ENCODE measurements at regions of chr10 and their contacts with region 1.

Region 1: GRCh38 chr10:82211346-82211745 is 336.4 kb downstream of the NRG3 start:
- DNase-seq: no peak
- ATAC-seq: no peak
- H3K4me3 Mint-ChIP-seq: no peak overlapping the region
- H3K27ac Mint-ChIP-seq: no peak overlapping the region
- H3K4me1 Mint-ChIP-seq: no peaks in the 10 kb centered on the region
- H3K27me3 Mint-ChIP-seq: no peaks in the 10 kb centered on the region
- CTCF ChIP-seq: no peak

Region 2: DNA sequence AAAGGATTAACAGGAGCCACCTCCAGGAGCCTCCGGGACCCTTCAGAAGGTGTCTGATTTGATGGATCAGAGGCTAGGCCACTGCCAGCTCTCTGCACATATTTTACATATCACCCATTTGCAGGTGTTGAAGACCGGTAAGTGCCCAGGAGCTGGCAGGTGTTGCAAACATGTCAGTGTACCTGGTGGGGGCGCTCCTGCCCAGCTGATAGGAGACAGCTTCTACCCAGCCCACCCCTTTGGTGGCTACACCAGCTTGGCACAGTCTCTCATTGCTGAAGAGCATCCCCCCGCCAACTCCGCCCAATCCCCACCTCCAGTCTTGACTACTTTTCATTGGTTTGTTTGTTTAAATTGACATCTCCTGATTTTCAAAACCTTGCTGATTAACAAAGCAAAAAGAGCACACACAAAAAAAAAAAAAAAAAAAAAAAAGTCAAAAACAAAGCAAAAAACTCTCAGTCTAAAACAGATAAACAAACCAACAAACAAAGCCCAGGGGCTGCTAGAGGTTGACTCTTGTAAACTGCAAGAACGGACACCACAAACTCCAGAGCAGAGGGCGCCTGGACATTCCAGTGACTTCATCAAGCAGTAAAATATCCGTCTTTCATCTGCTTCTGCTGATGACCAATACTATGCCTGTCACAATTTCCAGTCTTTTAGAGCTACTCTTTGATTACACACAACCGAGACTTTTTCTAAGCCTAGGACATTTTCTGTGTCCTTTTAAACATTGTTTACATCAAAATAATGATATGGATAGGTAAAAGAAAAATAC is 61.0 kb before region 1 on chr10:
- CTCF ChIA-PET with region 1: no interaction called
- POLR2A ChIA-PET with region 1: no interaction called
- intact Hi-C with region 1: loop called (anchors 10 kb)
- DNase-seq: no peak
- ATAC-seq: no peak
- H3K4me3 Mint-ChIP-seq: no peak overlapping the region
- H3K27ac Mint-ChIP-seq: no peak overlapping the region
- H3K4me1 Mint-ChIP-seq: no peaks in the 10 kb centered on the region
- H3K27me3 Mint-ChIP-seq: no peaks in the 10 kb centered on the region
- CTCF ChIP-seq: no peak

Region 3: DNA sequence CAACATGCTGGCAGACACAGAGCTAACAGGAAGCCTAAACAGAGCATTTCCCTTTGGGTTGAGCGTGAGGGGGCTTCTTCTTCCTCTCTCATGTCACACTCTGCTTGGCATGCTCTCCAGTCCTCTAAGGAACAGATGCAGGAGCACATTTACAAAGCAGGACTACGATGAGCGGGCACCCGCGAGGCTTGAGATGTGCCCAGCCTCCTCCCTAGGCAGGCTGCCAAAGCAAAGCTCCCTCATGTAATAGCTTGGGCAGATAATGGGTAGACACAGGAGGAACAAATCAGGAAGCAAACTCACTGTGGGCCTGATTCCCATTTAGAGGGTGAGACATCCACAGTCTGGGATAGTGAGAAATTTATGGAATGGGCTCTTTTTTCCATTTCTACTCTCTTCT is 182.8 kb after region 1 on chr10:
- CTCF ChIA-PET with region 1: no interaction called
- POLR2A ChIA-PET with region 1: no interaction called
- intact Hi-C with region 1: no loop called
- DNase-seq: no peak
- ATAC-seq: no peak
- H3K4me3 Mint-ChIP-seq: no peak overlapping the region
- H3K27ac Mint-ChIP-seq: no peak overlapping the region
- H3K4me1 Mint-ChIP-seq: no peaks in the 10 kb centered on the region
- H3K27me3 Mint-ChIP-seq: no peaks in the 10 kb centered on the region
- CTCF ChIP-seq: no peak